Adrenal gland (tissue), 19 donors: ENCODE measurements at regions of chr9 and their contacts with region 1.

Region 1: DNA sequence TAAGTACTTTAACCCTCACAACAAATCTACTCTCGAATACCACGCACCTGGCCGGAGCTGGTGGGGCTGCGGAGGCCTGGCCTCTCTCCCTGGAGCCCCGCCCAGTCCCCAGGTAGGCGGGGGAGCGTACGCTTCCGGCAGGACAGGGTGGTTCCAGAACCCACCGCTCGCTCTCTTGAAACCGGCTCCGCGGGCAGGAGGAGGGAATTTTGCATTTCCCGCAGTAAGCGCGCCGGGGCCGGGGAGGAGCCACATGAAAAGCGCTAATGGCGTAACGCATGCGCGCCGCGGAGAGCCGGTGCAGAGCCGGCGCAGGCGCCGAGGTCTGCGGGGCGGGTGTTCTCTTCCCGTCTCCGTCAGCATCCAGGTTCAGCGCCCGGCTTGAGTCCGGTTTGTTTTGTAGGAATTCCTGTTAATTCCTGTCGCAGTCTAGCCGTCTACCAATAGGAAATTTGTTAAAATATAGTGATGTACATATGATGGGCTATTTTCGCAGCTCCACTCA is 20.8 kb downstream of the CAVIN4 start:
- DNase-seq: peak; percentile 77 to 85 (median 80)
- H3K4me3 ChIP-seq: peak overlapping the region in 1 of 4 donors; percentile 63
- H3K27ac ChIP-seq: no peak overlapping the region
- H3K4me1 ChIP-seq: peaks cover 2 to 5% of the 10 kb centered on the region in 2 donors
- H3K27me3 ChIP-seq: no peaks in the 10 kb centered on the region
- CTCF ChIP-seq: no peak
- POLR2A ChIP-seq: no peak

Region 2: DNA sequence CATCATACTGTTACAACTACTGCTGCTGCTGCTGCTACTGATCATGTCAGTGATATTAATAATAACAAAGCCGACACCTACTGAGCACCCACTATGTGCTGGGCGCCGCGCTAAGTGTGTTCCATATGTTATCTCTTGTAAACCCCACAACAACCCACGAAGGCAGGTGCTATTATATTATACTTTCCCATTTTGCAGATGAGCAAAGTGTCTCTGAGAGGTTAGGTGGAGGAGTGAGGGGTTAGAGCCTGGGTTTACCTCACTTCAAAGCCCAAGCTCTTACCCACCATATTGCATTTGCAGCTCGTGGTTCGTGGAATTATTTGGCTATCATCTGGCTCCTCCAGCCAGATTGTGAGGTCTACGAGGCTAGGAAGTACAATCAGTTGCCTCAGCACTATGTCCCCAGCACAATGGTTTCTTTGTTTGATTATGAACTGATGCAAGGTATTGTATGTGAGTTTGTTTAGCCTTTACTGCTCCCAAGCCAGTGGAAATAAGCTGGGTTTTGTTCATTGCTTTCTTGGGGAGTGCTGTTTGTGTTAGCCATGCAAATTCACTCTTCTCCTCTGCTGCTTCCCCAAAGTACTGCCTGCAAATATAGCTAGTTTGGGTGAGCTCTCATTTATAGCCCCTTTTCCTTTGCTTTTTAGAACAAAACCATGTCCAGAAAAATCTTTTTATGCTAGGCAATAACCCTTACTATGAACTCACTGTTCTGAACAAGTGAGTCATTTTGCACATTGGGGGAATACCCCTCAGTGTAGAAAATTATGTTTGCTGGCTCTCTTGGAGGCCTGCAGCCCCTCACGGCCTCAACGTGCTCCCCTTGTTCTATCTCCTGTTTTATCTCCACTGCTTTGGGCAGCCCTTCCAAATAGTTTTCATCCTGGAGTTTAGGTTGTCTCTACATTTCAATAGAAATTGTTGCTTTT is 1424.9 kb before region 1 on chr9:
- intact Hi-C with region 1: loop called in 1 of 2 experiments (anchors 10 kb)
- DNase-seq: no peak
- H3K4me3 ChIP-seq: no peak overlapping the region
- H3K27ac ChIP-seq: no peak overlapping the region
- H3K4me1 ChIP-seq: no peaks in the 10 kb centered on the region
- H3K27me3 ChIP-seq: no peaks in the 10 kb centered on the region
- CTCF ChIP-seq: no peak
- POLR2A ChIP-seq: no peak

Region 3: GRCh38 chr9:100505564-100506159 is 93.0 kb before region 1 on chr9:
- intact Hi-C with region 1: loop called in 1 of 2 experiments (anchors 10 kb)
- DNase-seq: peak; percentile 61 to 85 (median 77)
- H3K4me3 ChIP-seq: no peak overlapping the region
- H3K27ac ChIP-seq: no peak overlapping the region
- H3K4me1 ChIP-seq: no peaks in the 10 kb centered on the region
- H3K27me3 ChIP-seq: no peaks in the 10 kb centered on the region
- CTCF ChIP-seq: peak; percentile 39 to 76 (median 52)
- POLR2A ChIP-seq: no peak

Region 4: GRCh38 chr9:101311758-101312420 is 713.2 kb after region 1 on chr9:
- intact Hi-C with region 1: loop called in 1 of 2 experiments (anchors 5 kb)
- DNase-seq: peak in 3 of 7 donors; percentile 12 to 32 (median 22)
- H3K4me3 ChIP-seq: no peak overlapping the region
- H3K27ac ChIP-seq: no peak overlapping the region
- H3K4me1 ChIP-seq: no peaks in the 10 kb centered on the region
- H3K27me3 ChIP-seq: no peaks in the 10 kb centered on the region
- CTCF ChIP-seq: peak; percentile 68 to 76 (median 73)
- POLR2A ChIP-seq: no peak